Caco-2 (cell line): ENCODE measurements at regions of chr11 and their contacts with region 1.

Region 1: GRCh38 chr11:95923728-95924413 is at the start of gene MTMR2:
- DNase-seq: peak; percentile 88 to 91
- H3K4me3 ChIP-seq: peak within 1 kb of the TSS; percentile 84
- H3K4me3 Mint-ChIP-seq: peak within 1 kb of the TSS; percentile 88
- H3K27ac Mint-ChIP-seq: peak within 1 kb of the TSS; percentile 96
- H3K4me1 ChIP-seq: peaks cover 6% of the 10 kb centered on the region
- H3K4me1 Mint-ChIP-seq: peaks cover 13% of the 10 kb centered on the region
- H3K27me3 ChIP-seq: no peaks in the 10 kb centered on the region
- H3K27me3 Mint-ChIP-seq: no peaks in the 10 kb centered on the region
- CTCF ChIP-seq: peak in 1 of 2 experiments; percentile 14
- total RNA-seq, gene MTMR2: 75.2 and 76.4 TPM in 2 replicates

Region 2: GRCh38 chr11:95671768-95672167 is 252.1 kb before region 1 on chr11:
- CTCF ChIA-PET with region 1: no interaction called
- POLR2A ChIA-PET with region 1: no interaction called
- intact Hi-C with region 1: no loop called
- DNase-seq: no peak
- H3K4me3 ChIP-seq: no peak overlapping the region
- H3K4me3 Mint-ChIP-seq: no peak overlapping the region
- H3K27ac Mint-ChIP-seq: no peak overlapping the region
- H3K4me1 ChIP-seq: no peaks in the 10 kb centered on the region
- H3K4me1 Mint-ChIP-seq: no peaks in the 10 kb centered on the region
- H3K27me3 ChIP-seq: no peaks in the 10 kb centered on the region
- H3K27me3 Mint-ChIP-seq: peaks cover 19% of the 10 kb centered on the region
- CTCF ChIP-seq: no peak

Region 3: GRCh38 chr11:95867105-95867504 is 56.8 kb before region 1 on chr11:
- CTCF ChIA-PET with region 1: no interaction called
- POLR2A ChIA-PET with region 1: no interaction called
- intact Hi-C with region 1: no loop called
- DNase-seq: no peak
- H3K4me3 ChIP-seq: no peak overlapping the region
- H3K4me3 Mint-ChIP-seq: no peak overlapping the region
- H3K27ac Mint-ChIP-seq: no peak overlapping the region
- H3K4me1 ChIP-seq: no peaks in the 10 kb centered on the region
- H3K4me1 Mint-ChIP-seq: no peaks in the 10 kb centered on the region
- H3K27me3 ChIP-seq: no peaks in the 10 kb centered on the region
- H3K27me3 Mint-ChIP-seq: no peaks in the 10 kb centered on the region
- CTCF ChIP-seq: no peak

Region 4: GRCh38 chr11:95904002-95904650 is 19.7 kb before region 1 on chr11:
- CTCF ChIA-PET with region 1: no interaction called
- POLR2A ChIA-PET with region 1: interaction called, 3 read pairs
- intact Hi-C with region 1: loop called (anchors 1 kb)
- DNase-seq: peak; percentile 86 to 90
- H3K4me3 ChIP-seq: no peak overlapping the region
- H3K4me3 Mint-ChIP-seq: no peak overlapping the region
- H3K27ac Mint-ChIP-seq: no peak overlapping the region
- H3K4me1 ChIP-seq: peaks cover 49% of the 10 kb centered on the region
- H3K4me1 Mint-ChIP-seq: peaks cover 9% of the 10 kb centered on the region
- H3K27me3 ChIP-seq: no peaks in the 10 kb centered on the region
- H3K27me3 Mint-ChIP-seq: no peaks in the 10 kb centered on the region
- CTCF ChIP-seq: no peak

Region 5: GRCh38 chr11:95985174-95985808 is 61.4 kb after region 1 on chr11:
- CTCF ChIA-PET with region 1: no interaction called
- POLR2A ChIA-PET with region 1: no interaction called
- intact Hi-C with region 1: loop called (anchors 2 kb)
- DNase-seq: no peak
- H3K4me3 ChIP-seq: no peak overlapping the region
- H3K4me3 Mint-ChIP-seq: no peak overlapping the region
- H3K27ac Mint-ChIP-seq: peak overlapping the region; percentile 1
- H3K4me1 ChIP-seq: peaks cover 6% of the 10 kb centered on the region; the same call in 1 of the 2 replicates
- H3K4me1 Mint-ChIP-seq: peaks cover 20% of the 10 kb centered on the region
- H3K27me3 ChIP-seq: no peaks in the 10 kb centered on the region
- H3K27me3 Mint-ChIP-seq: no peaks in the 10 kb centered on the region
- CTCF ChIP-seq: no peak

Region 6: DNA sequence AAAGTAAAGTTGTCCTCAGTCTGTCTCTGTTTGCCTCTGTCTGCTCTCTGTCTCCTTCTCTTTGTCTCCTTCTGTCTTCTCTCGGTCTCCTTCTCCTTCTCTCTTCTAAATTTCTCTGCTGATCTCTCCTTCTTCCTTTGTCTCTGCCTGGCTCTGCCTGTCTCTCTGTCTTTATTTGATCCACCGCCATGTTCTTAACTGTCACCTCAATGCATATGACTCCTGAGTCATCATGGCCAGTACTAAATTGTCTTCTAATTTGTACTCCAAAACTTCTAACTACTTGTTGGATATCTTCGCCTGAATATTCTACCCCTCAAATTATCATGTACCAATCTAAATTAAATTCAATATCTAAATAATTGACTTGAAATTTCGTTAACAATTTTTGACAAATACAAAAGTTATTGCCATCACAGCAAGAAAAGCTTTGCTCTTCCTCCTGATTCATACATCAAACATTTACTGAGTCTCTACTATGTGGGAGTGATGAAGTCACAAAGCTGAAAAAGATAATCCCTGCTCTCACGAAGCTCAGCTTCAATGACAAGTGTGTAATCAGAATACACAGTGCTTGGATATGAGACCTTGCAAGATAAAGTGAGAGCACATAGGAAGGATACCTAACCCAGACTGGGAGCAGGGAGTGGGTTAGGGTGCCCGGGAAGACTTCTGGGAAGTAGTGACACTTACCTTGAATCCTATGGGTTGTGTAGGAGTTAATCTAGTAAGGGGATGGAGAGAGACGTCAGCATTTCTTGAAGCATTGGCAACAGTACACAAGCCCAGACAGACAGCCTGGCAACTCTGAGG is 226.1 kb after region 1 on chr11:
- CTCF ChIA-PET with region 1: no interaction called
- POLR2A ChIA-PET with region 1: no interaction called
- intact Hi-C with region 1: loop called (anchors 5 kb)
- DNase-seq: no peak
- H3K4me3 ChIP-seq: no peak overlapping the region
- H3K4me3 Mint-ChIP-seq: no peak overlapping the region
- H3K27ac Mint-ChIP-seq: no peak overlapping the region
- H3K4me1 ChIP-seq: peaks cover 59% of the 10 kb centered on the region
- H3K4me1 Mint-ChIP-seq: peaks cover 35% of the 10 kb centered on the region
- H3K27me3 ChIP-seq: no peaks in the 10 kb centered on the region
- H3K27me3 Mint-ChIP-seq: no peaks in the 10 kb centered on the region
- CTCF ChIP-seq: no peak